ENCODE measurements at regions of chrX and their contacts with region 1.

Region 1: DNA sequence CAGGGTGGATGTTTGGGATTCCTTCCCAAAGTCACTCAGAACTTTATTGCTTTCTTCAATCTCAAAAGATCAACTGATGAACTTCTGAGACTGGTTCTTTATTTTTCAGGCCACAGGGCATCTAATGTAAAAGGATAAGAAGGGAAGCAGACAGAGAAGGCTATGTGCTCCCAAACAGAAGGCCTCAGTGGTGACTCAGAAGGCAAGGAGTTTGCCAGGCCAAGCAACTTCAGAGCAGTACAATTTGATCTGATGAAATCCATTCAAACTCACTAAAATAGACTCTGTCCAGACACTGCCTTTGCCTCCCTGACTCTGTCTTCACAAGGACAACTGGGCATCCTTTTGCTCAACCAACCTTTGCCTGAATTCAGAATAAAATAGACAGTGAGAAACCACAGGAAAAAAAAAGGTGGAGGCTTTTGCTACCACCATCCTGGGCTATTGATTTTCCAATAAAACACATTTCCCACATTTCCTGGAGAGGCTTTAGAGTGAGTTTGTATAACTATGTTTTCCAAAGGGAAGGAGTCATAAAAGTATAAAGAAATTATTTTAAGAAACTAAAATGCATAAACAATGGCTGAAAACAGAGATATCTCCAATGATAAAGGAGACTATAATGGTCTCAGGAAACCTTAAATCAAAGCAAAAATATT is 55.2 kb downstream of the ARHGEF6 start:
- DNase-seq: no peak
- ATAC-seq: peak in 6 of 8 donors; percentile 38 to 88 (median 65)
- H3K4me3 ChIP-seq: no peak overlapping the region
- H3K27ac ChIP-seq: peak overlapping the region in 4 of 10 donors; percentile 4 to 39 (median 20)
- H3K4me1 ChIP-seq: peaks cover 0 to 21% (median 8%) of the 10 kb centered on the region in 9 donors
- H3K27me3 ChIP-seq: no peaks in the 10 kb centered on the region
- CTCF ChIP-seq: no peak

Region 2: GRCh38 chrX:134773041-134773440 is 1952.5 kb before region 1 on chrX:
- intact Hi-C with region 1: no loop called
- DNase-seq: no peak
- ATAC-seq: no peak
- H3K4me3 ChIP-seq: no peak overlapping the region
- H3K27ac ChIP-seq: no peak overlapping the region
- H3K4me1 ChIP-seq: no peaks in the 10 kb centered on the region
- H3K27me3 ChIP-seq: peaks cover 0 to 13% (median 0%) of the 10 kb centered on the region in 7 donors
- CTCF ChIP-seq: no peak

Region 3: GRCh38 chrX:136477026-136477425 is 248.5 kb before region 1 on chrX:
- intact Hi-C with region 1: no loop called
- DNase-seq: no peak
- ATAC-seq: no peak
- H3K4me3 ChIP-seq: no peak overlapping the region
- H3K27ac ChIP-seq: no peak overlapping the region
- H3K4me1 ChIP-seq: peaks cover 0 to 5% (median 0%) of the 10 kb centered on the region in 9 donors
- H3K27me3 ChIP-seq: peaks cover 0 to 13% (median 0%) of the 10 kb centered on the region in 7 donors
- CTCF ChIP-seq: peak in 1 of 9 donors; percentile 11

Region 4: DNA sequence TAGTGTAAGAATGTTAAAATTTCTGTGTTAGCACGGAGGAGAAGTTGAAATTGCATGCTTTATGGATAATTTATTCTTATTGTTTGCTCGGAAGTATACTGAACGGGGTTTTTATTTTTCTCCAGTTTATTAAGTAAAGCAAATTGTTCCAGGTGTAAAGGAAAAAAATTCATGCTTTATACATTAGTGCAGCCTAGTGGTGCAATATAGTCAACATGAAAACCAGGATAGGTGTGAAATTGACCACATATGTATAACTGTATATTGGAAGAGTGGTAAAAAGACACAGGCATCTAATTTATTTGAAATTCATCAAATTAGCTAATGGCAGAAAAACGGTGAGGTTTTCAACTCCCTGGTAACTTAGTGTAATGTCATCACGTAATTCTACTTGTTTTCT is 236.9 kb before region 1 on chrX:
- intact Hi-C with region 1: no loop called
- DNase-seq: no peak
- ATAC-seq: no peak
- H3K4me3 ChIP-seq: no peak overlapping the region
- H3K27ac ChIP-seq: no peak overlapping the region
- H3K4me1 ChIP-seq: no peaks in the 10 kb centered on the region
- H3K27me3 ChIP-seq: peaks cover 0 to 86% (median 4%) of the 10 kb centered on the region in 7 donors
- CTCF ChIP-seq: no peak

Region 5: DNA sequence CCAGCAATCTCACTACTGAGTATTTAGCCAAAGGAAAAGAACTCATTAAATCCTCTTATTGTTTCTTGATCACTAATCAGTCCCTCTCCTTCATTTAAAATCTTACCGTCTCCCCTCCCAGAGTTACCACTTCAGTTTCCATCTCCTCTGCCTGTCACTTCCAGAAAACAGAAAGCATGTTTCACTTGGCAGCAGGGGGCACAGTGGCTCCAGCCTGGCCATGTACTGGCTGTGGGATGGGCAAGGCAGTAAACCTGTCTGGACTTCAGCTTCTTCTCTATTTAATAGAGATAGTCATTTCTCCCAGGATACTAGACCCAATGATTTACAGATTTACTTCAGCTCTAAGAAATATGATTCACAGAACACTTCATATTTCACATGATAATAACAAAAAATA is 14.4 kb before region 1 on chrX:
- intact Hi-C with region 1: no loop called
- DNase-seq: peak; percentile 15 to 30
- ATAC-seq: peak in 6 of 8 donors; percentile 55 to 86 (median 80)
- H3K4me3 ChIP-seq: no peak overlapping the region
- H3K27ac ChIP-seq: peak overlapping the region in 2 of 10 donors; percentile 21 to 72
- H3K4me1 ChIP-seq: peaks cover 0 to 35% (median 7%) of the 10 kb centered on the region in 9 donors
- H3K27me3 ChIP-seq: peaks cover 0 to 15% (median 0%) of the 10 kb centered on the region in 7 donors
- CTCF ChIP-seq: peak in 8 of 9 donors; percentile 28 to 62 (median 47)

Region 6: DNA sequence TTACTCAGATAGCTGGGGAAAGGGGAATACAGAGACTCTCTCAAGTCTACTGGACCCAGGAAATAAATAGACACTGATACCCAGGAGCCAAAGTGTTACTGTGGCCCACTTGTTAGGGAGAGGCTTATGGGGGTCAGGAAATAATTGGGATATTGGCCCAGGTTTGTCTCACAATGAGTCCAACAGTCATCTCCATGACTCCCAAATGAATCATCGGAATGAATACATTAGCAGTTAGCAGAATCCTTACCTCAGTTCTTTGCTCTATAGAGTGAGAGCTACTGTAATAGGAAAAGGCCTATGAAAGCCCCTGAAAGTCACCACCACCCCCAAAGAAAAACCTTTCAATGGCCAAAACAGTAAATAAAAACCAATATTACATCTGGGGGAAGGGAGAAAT is 97.6 kb after region 1 on chrX:
- intact Hi-C with region 1: loop called in 1 of 10 experiments (anchors 10 kb)
- DNase-seq: no peak
- ATAC-seq: no peak
- H3K4me3 ChIP-seq: no peak overlapping the region
- H3K27ac ChIP-seq: no peak overlapping the region
- H3K4me1 ChIP-seq: peaks cover 0 to under 1% (median 0%) of the 10 kb centered on the region in 9 donors
- H3K27me3 ChIP-seq: no peaks in the 10 kb centered on the region
- CTCF ChIP-seq: no peak

Measured in heart right ventricle (tissue), 16 donors.